ENCODE measurements at regions of chr9 and their contacts with region 1.

Region 1: GRCh38 chr9:20356403-20357035 is 265.8 kb downstream of the MLLT3 start:
- DNase-seq: peak; percentile 74
- H3K4me3 ChIP-seq: peak overlapping the region in 1 of 4 donors; percentile 23
- H3K27ac ChIP-seq: peak overlapping the region; percentile 45 to 68 (median 64)
- H3K4me1 ChIP-seq: peaks cover 0 to 22% (median 16%) of the 10 kb centered on the region in 4 donors
- H3K27me3 ChIP-seq: no peaks in the 10 kb centered on the region
- CTCF ChIP-seq: peak; percentile 55 to 72 (median 67)
- EP300 ChIP-seq: no peak
- POLR2A ChIP-seq: no peak

Region 2: DNA sequence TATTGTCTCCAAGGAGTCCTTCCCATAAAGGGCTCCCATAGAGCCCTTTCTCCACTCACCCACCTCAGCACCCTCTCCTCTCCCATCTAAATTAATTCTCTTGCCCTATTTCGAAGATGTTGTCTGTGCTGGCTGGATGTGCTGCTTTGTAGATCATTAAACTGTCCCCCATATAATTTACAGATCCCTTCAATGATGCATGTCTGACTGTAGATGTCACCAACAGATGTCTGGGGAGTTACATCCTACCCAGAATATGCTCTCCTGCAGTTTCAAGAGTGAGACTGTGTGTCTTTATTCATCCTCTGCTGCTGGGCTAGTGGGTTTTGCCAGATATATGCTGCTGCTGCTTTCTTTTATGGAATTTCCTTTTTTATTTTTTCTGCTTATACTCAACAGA is 85.4 kb before region 1 on chr9:
- in situ Hi-C with region 1: no loop called
- intact Hi-C with region 1: no loop called
- DNase-seq: no peak
- H3K4me3 ChIP-seq: no peak overlapping the region
- H3K27ac ChIP-seq: no peak overlapping the region
- H3K4me1 ChIP-seq: no peaks in the 10 kb centered on the region
- H3K27me3 ChIP-seq: no peaks in the 10 kb centered on the region
- CTCF ChIP-seq: no peak
- EP300 ChIP-seq: no peak
- POLR2A ChIP-seq: no peak

Region 3: DNA sequence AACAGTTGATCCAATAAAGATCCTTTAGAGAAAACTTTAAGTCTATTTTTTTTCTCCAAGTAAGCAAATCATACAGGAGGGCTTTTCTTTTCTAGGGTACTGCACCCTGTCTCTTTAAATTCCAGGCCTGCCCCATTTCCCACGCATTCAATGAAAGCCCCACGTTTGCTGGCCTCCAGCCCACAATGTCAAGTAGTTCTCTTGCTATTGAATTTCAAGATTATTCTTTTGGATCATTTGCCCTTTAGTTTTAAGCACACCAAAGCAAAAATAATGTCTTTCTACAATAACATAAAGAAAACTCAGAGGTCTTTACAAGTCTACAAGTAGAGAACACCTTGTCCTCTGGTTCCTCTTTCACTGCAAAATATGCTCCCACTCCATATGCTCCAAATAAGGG is 250.1 kb after region 1 on chr9:
- in situ Hi-C with region 1: no loop called
- intact Hi-C with region 1: loop called (anchors 5 kb)
- DNase-seq: no peak
- H3K4me3 ChIP-seq: no peak overlapping the region
- H3K27ac ChIP-seq: peak overlapping the region in 3 of 4 donors; percentile 15 to 44 (median 42)
- H3K4me1 ChIP-seq: peaks cover 19 to 85% (median 59%) of the 10 kb centered on the region in 4 donors
- H3K27me3 ChIP-seq: no peaks in the 10 kb centered on the region
- CTCF ChIP-seq: no peak
- EP300 ChIP-seq: no peak
- POLR2A ChIP-seq: no peak

Region 4: DNA sequence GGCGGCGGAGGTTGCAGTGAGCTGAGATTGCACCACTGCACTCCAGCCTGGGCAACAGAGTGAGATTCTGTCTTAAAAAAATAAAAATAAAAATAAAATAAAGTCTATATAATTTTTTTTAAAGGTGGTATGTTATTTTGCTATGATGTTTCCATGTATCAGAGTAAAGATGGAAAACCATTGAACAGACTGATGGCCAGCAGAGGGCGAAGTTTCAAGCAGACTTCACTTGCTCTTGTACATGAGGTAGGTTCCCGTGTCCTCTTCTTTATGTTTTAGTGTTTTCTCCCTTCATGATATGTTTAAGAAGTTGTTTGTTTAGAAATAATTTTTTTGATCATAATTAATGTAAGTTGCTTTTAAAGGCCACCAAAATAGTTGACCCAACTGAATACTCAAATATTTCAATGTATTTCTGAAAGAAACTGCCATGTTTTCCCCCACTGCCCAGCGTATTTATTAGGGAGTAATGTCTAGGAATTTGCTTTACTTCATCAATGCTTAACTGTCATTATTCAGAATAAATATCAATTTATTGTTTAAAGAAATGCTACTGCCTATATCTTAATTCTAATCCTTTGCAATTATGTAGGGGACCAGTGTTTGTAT is 528.6 kb after region 1 on chr9:
- in situ Hi-C with region 1: loop called in 2 of 4 experiments (anchors 25 kb)
- intact Hi-C with region 1: no loop called
- DNase-seq: peak; percentile 61
- H3K4me3 ChIP-seq: no peak overlapping the region
- H3K27ac ChIP-seq: no peak overlapping the region
- H3K4me1 ChIP-seq: no peaks in the 10 kb centered on the region
- H3K27me3 ChIP-seq: no peaks in the 10 kb centered on the region
- CTCF ChIP-seq: peak; percentile 51 to 74 (median 59)
- EP300 ChIP-seq: no peak
- POLR2A ChIP-seq: no peak

Region 5: GRCh38 chr9:20941174-20941690 is 584.7 kb after region 1 on chr9:
- in situ Hi-C with region 1: loop called in 2 of 4 experiments (anchors 10 kb)
- intact Hi-C with region 1: no loop called
- DNase-seq: peak; percentile 50
- H3K4me3 ChIP-seq: no peak overlapping the region
- H3K27ac ChIP-seq: no peak overlapping the region
- H3K4me1 ChIP-seq: peaks cover 0 to 3% (median 0%) of the 10 kb centered on the region in 4 donors
- H3K27me3 ChIP-seq: no peaks in the 10 kb centered on the region
- CTCF ChIP-seq: peak; percentile 72 to 83 (median 79)
- EP300 ChIP-seq: no peak
- POLR2A ChIP-seq: no peak

Measured in transverse colon (tissue), 4 donors.